CD4-positive, alpha-beta memory T cell (primary cell): ENCODE measurements at regions of chr2 and their contacts with region 1.

Region 1: DNA sequence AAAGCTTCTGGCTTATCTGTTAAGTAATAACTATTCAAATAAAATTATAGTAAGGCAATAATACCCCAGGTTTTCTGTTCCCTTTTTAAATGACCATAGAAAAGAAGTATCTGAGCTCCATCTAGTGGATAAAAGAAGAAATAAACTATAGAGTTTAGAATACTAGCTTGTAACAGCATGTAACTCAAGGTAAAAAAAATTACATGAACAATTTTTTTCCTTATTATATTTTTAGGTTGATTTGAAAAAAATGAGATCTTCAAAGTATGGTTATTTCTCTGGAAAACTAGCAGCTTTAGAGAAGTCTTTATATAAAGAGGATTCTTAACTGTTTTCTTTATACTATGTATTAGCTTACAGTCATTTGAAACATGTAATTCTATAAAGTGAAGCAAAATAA is 58.1 kb downstream of the NCKAP1 start:
- DNase-seq: peak in 4 of 5 donors; percentile 22 to 47 (median 25)
- H3K4me3 ChIP-seq: no peak overlapping the region
- H3K4me3 Mint-ChIP-seq: no peak overlapping the region
- H3K27ac ChIP-seq: no peak overlapping the region
- H3K27ac Mint-ChIP-seq: no peak overlapping the region
- H3K4me1 ChIP-seq: no peaks in the 10 kb centered on the region
- H3K4me1 Mint-ChIP-seq: no peaks in the 10 kb centered on the region
- H3K27me3 ChIP-seq: no peaks in the 10 kb centered on the region
- H3K27me3 Mint-ChIP-seq: no peaks in the 10 kb centered on the region

Region 2: GRCh38 chr2:182186132-182186735 is 793.9 kb before region 1 on chr2:
- CTCF ChIA-PET with region 1: interaction called, 28 read pairs
- POLR2A ChIA-PET with region 1: no interaction called
- intact Hi-C with region 1: no loop called
- DNase-seq: peak in 4 of 5 donors; percentile 21 to 28 (median 22)
- H3K4me3 ChIP-seq: no peak overlapping the region
- H3K4me3 Mint-ChIP-seq: no peak overlapping the region
- H3K27ac ChIP-seq: no peak overlapping the region
- H3K27ac Mint-ChIP-seq: no peak overlapping the region
- H3K4me1 ChIP-seq: no peaks in the 10 kb centered on the region
- H3K4me1 Mint-ChIP-seq: no peaks in the 10 kb centered on the region
- H3K27me3 ChIP-seq: no peaks in the 10 kb centered on the region
- H3K27me3 Mint-ChIP-seq: peaks cover 3% of the 10 kb centered on the region in 2 donors

Region 3: GRCh38 chr2:182240862-182241371 is 739.2 kb before region 1 on chr2:
- CTCF ChIA-PET with region 1: interaction called, 4 read pairs
- POLR2A ChIA-PET with region 1: no interaction called
- intact Hi-C with region 1: loop called (anchors 2 kb)
- DNase-seq: peak in 2 of 5 donors; percentile 1 to 3
- H3K4me3 ChIP-seq: no peak overlapping the region
- H3K4me3 Mint-ChIP-seq: no peak overlapping the region
- H3K27ac ChIP-seq: no peak overlapping the region
- H3K27ac Mint-ChIP-seq: no peak overlapping the region
- H3K4me1 ChIP-seq: no peaks in the 10 kb centered on the region
- H3K4me1 Mint-ChIP-seq: peaks cover 0 to 2% (median 0%) of the 10 kb centered on the region in 4 donors
- H3K27me3 ChIP-seq: no peaks in the 10 kb centered on the region
- H3K27me3 Mint-ChIP-seq: peaks cover 1 to 2% of the 10 kb centered on the region in 2 donors

Region 4: GRCh38 chr2:182666674-182667314 is 313.3 kb before region 1 on chr2:
- CTCF ChIA-PET with region 1: interaction called, 42 read pairs
- POLR2A ChIA-PET with region 1: no interaction called
- intact Hi-C with region 1: loop called (anchors 1 kb)
- DNase-seq: peak in 4 of 5 donors; percentile 18 to 36 (median 23)
- H3K4me3 ChIP-seq: no peak overlapping the region
- H3K4me3 Mint-ChIP-seq: no peak overlapping the region
- H3K27ac ChIP-seq: no peak overlapping the region
- H3K27ac Mint-ChIP-seq: no peak overlapping the region
- H3K4me1 ChIP-seq: no peaks in the 10 kb centered on the region
- H3K4me1 Mint-ChIP-seq: peaks cover 0 to 1% (median 0%) of the 10 kb centered on the region in 4 donors
- H3K27me3 ChIP-seq: no peaks in the 10 kb centered on the region
- H3K27me3 Mint-ChIP-seq: peaks cover 0 to 4% of the 10 kb centered on the region in 2 donors

Region 5: GRCh38 chr2:182763311-182763912 is 216.7 kb before region 1 on chr2:
- CTCF ChIA-PET with region 1: interaction called, 7 read pairs
- POLR2A ChIA-PET with region 1: no interaction called
- intact Hi-C with region 1: loop called (anchors 10 kb)
- DNase-seq: no peak
- H3K4me3 ChIP-seq: no peak overlapping the region
- H3K4me3 Mint-ChIP-seq: no peak overlapping the region
- H3K27ac ChIP-seq: no peak overlapping the region
- H3K27ac Mint-ChIP-seq: no peak overlapping the region
- H3K4me1 ChIP-seq: no peaks in the 10 kb centered on the region
- H3K4me1 Mint-ChIP-seq: peaks cover 0 to 4% (median 2%) of the 10 kb centered on the region in 4 donors
- H3K27me3 ChIP-seq: no peaks in the 10 kb centered on the region
- H3K27me3 Mint-ChIP-seq: no peaks in the 10 kb centered on the region

Region 6: GRCh38 chr2:182792441-182792840 is 187.7 kb before region 1 on chr2:
- CTCF ChIA-PET with region 1: no interaction called
- POLR2A ChIA-PET with region 1: no interaction called
- intact Hi-C with region 1: no loop called
- DNase-seq: no peak
- H3K4me3 ChIP-seq: no peak overlapping the region
- H3K4me3 Mint-ChIP-seq: no peak overlapping the region
- H3K27ac ChIP-seq: no peak overlapping the region
- H3K27ac Mint-ChIP-seq: no peak overlapping the region
- H3K4me1 ChIP-seq: no peaks in the 10 kb centered on the region
- H3K4me1 Mint-ChIP-seq: no peaks in the 10 kb centered on the region
- H3K27me3 ChIP-seq: no peaks in the 10 kb centered on the region
- H3K27me3 Mint-ChIP-seq: peaks cover 7 to 8% of the 10 kb centered on the region in 2 donors

Region 7: DNA sequence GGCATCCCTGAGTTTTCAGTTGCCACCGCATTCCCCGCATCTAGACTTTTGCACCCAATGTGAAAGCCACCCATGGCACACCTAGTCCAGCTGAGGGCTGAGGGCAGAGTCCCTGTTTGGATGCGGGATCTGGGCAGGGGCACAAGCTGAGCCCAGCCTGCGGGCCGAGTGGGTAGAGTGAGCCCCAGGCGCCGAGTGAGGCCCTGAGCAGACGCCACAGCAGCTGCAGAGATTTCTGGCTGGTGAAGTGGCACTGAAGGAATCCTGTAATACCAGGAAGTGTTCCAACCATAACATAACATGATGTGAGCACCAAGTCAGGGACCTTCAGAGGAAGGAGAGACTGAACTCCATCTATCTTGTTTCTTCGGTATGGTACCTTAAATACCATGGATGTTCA is 85.9 kb before region 1 on chr2:
- CTCF ChIA-PET with region 1: no interaction called
- POLR2A ChIA-PET with region 1: no interaction called
- intact Hi-C with region 1: no loop called
- DNase-seq: no peak
- H3K4me3 ChIP-seq: no peak overlapping the region
- H3K4me3 Mint-ChIP-seq: no peak overlapping the region
- H3K27ac ChIP-seq: no peak overlapping the region
- H3K27ac Mint-ChIP-seq: no peak overlapping the region
- H3K4me1 ChIP-seq: no peaks in the 10 kb centered on the region
- H3K4me1 Mint-ChIP-seq: peaks cover 0 to 9% (median 2%) of the 10 kb centered on the region in 4 donors
- H3K27me3 ChIP-seq: no peaks in the 10 kb centered on the region
- H3K27me3 Mint-ChIP-seq: peaks cover 0 to 3% of the 10 kb centered on the region in 2 donors

Region 8: GRCh38 chr2:182949572-182950189 is 30.4 kb before region 1 on chr2:
- CTCF ChIA-PET with region 1: interaction called, 11 read pairs
- POLR2A ChIA-PET with region 1: no interaction called
- intact Hi-C with region 1: no loop called
- DNase-seq: no peak
- H3K4me3 ChIP-seq: no peak overlapping the region
- H3K4me3 Mint-ChIP-seq: no peak overlapping the region
- H3K27ac ChIP-seq: no peak overlapping the region
- H3K27ac Mint-ChIP-seq: no peak overlapping the region
- H3K4me1 ChIP-seq: no peaks in the 10 kb centered on the region
- H3K4me1 Mint-ChIP-seq: peaks cover 0 to 3% (median under 1%) of the 10 kb centered on the region in 4 donors
- H3K27me3 ChIP-seq: no peaks in the 10 kb centered on the region
- H3K27me3 Mint-ChIP-seq: no peaks in the 10 kb centered on the region

Region 9: DNA sequence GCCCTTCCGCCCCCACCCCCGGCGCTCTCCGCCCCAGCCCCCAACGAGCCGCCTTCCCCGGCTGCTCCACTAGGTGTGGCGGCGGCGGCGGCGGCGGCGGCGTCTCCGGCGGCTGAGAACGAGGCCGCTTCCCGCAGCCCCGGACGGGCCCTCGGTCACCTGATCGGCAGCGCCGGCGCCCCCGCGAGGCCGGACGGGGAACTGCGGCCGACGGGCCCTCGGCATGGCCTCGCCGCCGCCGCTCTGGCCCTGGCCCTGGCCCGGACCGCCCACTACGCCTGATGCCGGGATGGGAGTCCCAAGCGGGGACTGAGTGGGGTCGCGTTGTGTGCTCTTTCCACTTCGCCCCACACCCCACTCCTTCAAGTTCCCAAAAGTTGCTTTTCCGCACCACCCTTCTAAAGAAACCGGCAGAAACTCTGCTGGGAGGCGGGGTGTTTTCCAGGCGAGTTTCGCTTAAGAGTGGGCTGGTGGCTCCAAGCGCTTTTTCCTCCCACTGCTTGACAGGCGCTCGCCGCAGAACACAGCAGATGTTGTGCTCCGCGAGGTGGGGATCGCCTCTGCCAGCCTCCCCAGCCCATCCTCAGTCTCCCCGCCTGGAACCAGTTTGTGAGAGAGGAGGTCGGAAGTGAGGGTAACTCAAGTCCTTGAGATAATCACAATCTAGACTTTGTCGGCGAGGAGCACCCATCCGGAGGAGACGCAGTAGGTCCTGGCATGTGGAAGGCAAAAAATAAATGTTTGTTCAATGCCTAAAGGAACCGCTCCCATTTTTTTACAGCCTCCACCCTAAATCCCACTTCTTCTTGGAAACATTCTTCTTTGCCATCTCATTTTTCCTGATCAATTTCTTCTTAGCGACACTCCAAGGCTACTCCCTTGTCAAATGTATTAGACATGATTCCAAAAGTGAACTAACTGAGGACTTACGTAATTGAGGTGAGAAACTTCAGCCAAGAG is 58.5 kb after region 1 on chr2 and contains the start of gene NCKAP1:
- CTCF ChIA-PET with region 1: interaction called, 3 read pairs
- POLR2A ChIA-PET with region 1: no interaction called
- intact Hi-C with region 1: loop called (anchors 5 kb)
- DNase-seq: peak; percentile 83 to 86 (median 85)
- H3K4me3 ChIP-seq: peak within 1 kb of the TSS; percentile 2 to 66
- H3K4me3 Mint-ChIP-seq: peak within 1 kb of the TSS; percentile 83 to 96 (median 87)
- H3K27ac ChIP-seq: no peak within 1 kb of the TSS
- H3K27ac Mint-ChIP-seq: peak within 1 kb of the TSS; percentile 57 to 87 (median 72)
- H3K4me1 ChIP-seq: peaks cover 37% of the 10 kb centered on the region
- H3K4me1 Mint-ChIP-seq: peaks cover 26 to 38% (median 31%) of the 10 kb centered on the region in 4 donors
- H3K27me3 ChIP-seq: peaks cover 13% of the 10 kb centered on the region
- H3K27me3 Mint-ChIP-seq: peaks cover 22 to 28% of the 10 kb centered on the region in 2 donors
- total RNA-seq, gene NCKAP1: 4.9 to 6.3 TPM